Right cardiac atrium (tissue), 5 donors: ENCODE measurements at regions of chr16 and their contacts with region 1.

Region 1: DNA sequence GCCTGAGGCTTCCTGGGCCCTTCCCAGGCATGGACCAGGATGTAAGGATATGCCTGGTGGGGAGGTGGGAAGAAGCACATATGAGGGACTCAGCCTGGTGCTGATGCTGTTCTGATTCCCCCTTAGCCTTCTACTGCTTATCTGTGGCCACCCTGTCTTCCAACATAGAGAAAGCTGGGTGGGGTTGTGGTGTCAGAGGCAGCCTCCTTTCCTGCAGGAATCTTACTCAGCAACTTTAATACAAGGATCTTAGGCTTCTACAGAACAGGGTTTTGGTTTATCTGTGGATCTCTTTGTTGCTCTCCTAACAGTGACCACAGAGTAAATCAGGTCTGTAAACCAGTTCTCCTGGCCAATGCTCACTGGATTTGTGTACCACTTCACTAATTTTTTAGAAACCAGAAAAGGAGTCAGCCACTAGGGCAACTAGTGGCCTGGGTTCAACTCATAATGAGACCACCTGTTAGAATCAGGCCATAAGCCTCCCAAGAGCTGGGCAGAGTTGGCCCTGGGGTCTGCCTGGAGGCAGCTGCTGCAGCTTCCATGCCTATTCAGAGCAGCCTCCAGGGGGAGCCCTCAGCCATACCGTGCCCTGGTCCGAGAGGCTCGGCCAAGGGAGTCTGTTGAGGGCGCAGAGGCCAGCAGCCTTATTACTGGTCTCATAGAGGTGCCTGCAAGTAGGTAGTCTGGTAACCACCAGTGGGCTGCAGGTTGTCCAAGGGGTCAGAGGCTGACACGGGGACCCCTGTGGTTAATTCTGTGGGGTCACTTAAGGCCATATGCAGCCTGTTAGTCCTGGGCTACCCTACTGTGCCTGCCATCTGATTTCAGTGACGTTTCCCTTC is 7.1 kb downstream of the HAS3 start:
- DNase-seq: peak; percentile 59 to 81 (median 75)
- ATAC-seq: peak; percentile 52 to 68
- H3K4me3 ChIP-seq: no peak overlapping the region
- H3K27ac ChIP-seq: no peak overlapping the region
- H3K4me1 ChIP-seq: peaks cover 7% of the 10 kb centered on the region
- H3K27me3 ChIP-seq: no peaks in the 10 kb centered on the region

Region 2: GRCh38 chr16:68902008-68902968 is 210.2 kb before region 1 on chr16:
- intact Hi-C with region 1: loop called in 2 of 4 experiments (anchors 5 to 10 kb)
- DNase-seq: no peak
- ATAC-seq: peak; percentile 40 to 44
- H3K4me3 ChIP-seq: no peak overlapping the region
- H3K27ac ChIP-seq: no peak overlapping the region
- H3K4me1 ChIP-seq: no peaks in the 10 kb centered on the region
- H3K27me3 ChIP-seq: no peaks in the 10 kb centered on the region